Cardiac septum (tissue), 1 donor: ENCODE measurements at regions of chr18 and their contacts with region 1.

Region 1: DNA sequence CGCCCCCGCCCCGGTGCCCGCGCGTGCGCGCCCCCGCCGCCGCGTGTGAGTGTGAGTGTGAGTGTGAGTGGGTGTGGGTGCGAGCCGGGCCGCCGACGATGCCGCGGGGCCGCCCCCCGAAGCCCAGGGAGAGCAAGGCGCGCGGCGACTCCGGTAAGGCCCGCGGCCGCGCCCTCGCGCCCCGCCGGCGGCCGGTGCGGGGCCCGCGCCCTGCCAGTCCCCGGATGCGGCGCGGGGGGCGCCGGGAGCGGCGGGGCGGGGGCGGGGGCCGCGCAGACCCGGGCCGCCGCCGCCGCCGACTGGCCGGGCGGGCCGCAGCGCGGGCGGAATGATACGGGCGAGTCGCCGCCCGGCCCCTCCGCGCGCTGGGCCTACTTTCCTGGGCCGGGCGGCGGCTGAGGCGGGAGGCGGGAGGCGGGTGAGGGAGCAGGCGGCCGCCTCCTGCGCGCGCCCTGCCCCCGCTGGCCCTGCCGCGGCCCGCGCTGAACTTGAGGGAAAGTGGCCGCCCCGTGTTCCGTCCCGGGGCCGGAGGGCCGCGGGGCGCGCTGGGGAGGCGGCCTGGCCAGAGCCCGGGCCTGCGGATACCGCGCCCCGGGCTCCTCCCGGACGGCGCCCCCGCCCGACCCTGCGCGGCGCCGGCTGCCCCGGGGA is at the start of gene ZNF236:
- DNase-seq: no peak
- total RNA-seq, gene ZNF236: 12.7 TPM

Region 2: DNA sequence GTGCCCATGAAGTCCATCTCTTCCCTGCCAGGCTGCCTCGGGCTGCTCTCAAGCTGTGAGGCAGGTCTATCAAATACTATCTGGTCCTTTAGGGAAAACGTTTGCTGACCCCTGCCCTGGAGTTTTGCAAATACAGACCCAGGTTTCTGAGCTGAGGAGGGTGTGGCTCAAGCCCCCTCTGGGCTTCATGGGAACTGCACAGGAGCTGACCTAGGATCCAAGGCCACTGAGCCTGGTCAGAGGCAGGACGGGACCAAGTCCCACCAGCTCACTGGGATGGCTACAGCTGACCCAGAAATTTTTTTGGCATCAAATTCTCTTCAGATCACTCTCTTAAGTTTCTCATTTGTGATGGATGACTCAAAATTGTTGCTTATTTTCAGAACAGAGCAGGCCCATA is 341.7 kb before region 1 on chr18:
- intact Hi-C with region 1: loop called (anchors 10 kb)
- DNase-seq: no peak